Lower leg skin (tissue), 4 donors: ENCODE measurements at regions of chr14 and their contacts with region 1.

Region 1: DNA sequence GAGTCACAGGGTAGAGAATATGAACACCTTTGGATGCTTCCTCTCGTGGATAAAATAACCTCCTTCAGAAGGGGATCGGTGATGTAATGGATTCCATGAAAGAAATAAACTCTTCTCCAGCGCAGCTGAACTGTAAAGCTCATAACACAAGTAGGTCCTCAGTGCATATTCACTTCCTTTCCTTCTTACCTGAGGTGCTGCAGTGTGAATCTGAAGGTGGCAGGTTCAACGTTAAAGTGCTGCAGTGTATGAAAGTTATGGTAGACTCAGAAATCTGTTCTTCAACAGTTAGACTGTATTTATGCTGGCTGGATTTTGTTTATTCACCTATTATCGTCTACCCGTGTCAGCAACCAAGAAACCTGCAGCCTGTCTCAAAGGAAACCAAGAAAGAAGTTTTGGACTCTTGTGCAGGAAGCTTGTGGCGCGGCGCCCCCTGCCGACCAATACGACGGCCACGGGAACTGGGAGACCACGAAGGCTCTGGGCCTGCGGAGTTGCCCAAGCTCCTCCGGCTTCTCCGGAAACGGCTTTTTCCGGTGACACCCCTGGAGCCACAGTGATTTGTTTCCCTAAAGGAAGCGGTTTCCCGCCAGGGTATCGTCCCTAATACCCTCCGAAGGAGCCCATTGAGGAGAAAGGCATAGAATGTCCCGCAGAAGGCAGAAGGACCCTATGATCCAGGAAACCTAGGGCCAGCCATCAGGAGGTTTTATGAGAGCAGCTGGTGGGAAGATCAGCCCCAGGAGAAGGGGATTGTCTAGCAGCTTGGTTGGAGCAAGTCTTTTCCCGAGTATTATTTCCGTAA is 17.6 kb upstream of the RNASE3 start:
- DNase-seq: peak; percentile 65 to 96
- H3K4me3 ChIP-seq: no peak overlapping the region
- CTCF ChIP-seq: no peak
- POLR2A ChIP-seq: no peak

Region 2: DNA sequence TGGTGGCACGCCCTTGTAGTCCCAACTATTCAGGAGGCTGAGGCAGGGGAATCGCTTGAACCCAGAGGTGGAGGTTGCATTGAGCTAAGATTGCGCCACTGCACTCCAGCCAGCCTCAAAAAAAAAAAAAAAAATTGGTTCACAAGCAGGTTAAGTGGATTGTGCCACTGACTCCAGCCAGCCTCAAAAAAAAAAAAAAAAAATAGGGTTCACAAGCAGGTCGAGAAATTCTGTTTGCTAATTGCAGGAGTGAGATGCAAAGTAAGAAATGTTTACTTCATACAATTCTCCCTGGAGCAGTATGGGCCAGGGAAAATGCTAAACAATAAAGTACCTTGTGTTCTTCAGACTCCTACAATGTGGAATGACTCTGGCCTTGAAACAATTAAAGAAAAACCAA is 99.2 kb before region 1 on chr14:
- intact Hi-C with region 1: no loop called
- DNase-seq: no peak
- H3K4me3 ChIP-seq: no peak overlapping the region
- CTCF ChIP-seq: no peak
- POLR2A ChIP-seq: no peak

Region 3: DNA sequence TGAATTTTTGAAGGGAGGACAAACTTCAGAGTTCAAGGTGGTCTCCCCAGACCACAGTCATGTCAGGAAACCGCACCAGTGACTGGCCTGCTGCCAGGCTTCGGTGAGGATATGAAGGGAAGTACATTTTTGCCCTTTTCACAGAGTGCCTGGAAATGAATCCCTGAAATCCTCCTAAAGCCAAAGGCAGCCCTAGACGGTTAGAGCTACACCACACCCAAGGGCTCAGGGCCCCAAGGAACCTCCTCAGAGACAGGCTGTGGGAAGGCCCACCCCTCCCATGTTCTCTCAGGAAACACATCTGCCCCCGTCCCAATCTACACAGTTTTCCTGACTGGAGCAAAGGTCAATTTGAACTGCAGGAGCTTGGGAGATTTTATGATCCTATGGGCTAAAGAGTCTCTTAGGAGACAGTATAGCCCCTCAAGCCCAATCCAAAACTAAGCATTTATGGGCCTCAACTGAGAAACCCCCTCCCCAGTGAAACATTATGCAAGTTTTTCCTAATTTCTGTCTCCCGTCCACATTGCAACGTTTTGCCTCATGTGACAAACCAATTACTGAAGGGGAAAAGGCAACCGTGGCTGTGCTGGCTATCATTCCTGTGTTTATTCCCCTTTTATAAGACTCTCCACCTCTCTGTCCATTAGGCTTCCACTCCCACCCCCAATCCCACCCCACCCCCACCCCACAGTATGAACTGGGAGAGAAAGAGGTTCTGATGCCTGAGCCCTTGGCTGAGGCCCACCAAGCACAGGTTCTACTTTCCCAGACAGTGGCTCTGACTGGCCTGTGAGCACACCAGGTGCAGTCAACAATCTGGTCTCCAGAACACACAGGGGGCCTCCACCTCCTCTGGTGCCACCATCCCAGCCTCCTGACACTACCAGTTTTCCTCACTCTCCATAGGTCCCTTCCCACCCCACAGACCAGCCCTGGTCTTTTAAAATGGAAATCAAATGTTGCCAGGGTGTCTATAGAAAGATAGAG is 61.3 kb before region 1 on chr14:
- intact Hi-C with region 1: loop called (anchors 2 kb)
- DNase-seq: no peak
- H3K4me3 ChIP-seq: no peak overlapping the region
- CTCF ChIP-seq: no peak
- POLR2A ChIP-seq: no peak

Region 4: DNA sequence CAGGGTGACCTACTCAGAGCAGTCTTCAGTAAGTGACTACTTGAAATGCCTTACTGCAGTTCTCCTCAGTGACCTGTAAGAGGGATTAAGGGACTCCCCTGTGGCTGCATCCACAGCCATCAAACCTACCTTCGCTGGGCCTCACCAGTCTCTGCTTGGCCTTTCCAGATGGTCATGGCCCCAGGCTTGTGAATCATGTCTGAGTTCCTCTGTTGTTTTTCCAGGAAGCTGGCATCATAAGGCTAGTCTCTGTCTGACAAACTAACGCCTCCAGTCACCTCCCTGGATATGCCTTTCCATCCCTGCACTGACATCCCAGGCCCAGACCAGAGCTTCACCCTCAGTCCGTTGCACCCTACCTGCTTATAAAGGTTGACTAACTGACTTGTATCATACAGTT is 95.8 kb after region 1 on chr14:
- intact Hi-C with region 1: loop called (anchors 10 kb)
- DNase-seq: no peak
- H3K4me3 ChIP-seq: no peak overlapping the region
- CTCF ChIP-seq: no peak
- POLR2A ChIP-seq: no peak

Region 5: DNA sequence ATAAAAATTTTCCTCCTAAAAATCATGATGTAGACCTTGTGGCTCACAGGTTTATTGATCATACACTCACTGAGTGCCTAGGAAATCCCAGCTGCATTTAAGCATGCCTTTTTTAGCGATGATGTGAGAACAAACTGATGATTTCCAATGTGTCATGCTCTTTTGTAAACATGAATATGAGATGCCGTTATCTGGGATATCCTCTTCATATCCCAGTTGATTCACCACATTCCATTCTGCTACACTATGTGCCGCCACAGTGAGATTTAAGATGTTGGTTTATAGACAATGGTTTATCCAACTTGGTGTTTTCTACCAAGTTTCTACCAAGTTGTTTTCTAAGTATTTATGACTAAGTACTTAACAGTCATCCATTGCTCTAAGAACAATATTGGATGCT is 794.8 kb after region 1 on chr14:
- intact Hi-C with region 1: no loop called
- DNase-seq: no peak
- H3K4me3 ChIP-seq: no peak overlapping the region
- CTCF ChIP-seq: no peak
- POLR2A ChIP-seq: no peak

Region 6: DNA sequence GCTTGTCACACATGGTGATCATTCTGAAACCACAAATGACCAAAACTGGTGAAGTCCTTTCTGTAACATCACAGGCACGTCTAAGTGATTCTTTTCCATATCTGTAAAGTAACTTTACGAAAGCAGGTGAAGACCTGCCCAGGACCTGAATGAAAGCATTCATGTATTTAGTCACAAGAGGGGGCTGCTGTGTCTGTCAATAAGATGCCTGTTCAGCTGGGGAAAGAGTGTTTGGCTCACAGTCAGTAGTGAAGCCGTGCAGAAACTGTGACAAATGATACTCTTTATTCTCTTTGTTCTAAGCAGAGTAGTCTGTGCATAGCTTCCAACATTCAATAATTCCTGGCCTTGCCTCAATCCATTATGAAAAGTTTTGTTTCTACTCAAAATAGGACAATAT is 1173.5 kb after region 1 on chr14:
- intact Hi-C with region 1: no loop called
- DNase-seq: no peak
- H3K4me3 ChIP-seq: no peak overlapping the region
- CTCF ChIP-seq: no peak
- POLR2A ChIP-seq: no peak